Testis (tissue), 5 donors: ENCODE measurements at regions of chr14 and their contacts with region 1.

Region 1: GRCh38 chr14:73503648-73504047 is 12.9 kb downstream of the RIOX1 start:
- DNase-seq: no peak
- H3K4me3 ChIP-seq: no peak overlapping the region
- H3K27ac ChIP-seq: no peak overlapping the region
- H3K4me1 ChIP-seq: no peaks in the 10 kb centered on the region
- H3K27me3 ChIP-seq: no peaks in the 10 kb centered on the region
- CTCF ChIP-seq: no peak
- POLR2A ChIP-seq: no peak

Region 2: DNA sequence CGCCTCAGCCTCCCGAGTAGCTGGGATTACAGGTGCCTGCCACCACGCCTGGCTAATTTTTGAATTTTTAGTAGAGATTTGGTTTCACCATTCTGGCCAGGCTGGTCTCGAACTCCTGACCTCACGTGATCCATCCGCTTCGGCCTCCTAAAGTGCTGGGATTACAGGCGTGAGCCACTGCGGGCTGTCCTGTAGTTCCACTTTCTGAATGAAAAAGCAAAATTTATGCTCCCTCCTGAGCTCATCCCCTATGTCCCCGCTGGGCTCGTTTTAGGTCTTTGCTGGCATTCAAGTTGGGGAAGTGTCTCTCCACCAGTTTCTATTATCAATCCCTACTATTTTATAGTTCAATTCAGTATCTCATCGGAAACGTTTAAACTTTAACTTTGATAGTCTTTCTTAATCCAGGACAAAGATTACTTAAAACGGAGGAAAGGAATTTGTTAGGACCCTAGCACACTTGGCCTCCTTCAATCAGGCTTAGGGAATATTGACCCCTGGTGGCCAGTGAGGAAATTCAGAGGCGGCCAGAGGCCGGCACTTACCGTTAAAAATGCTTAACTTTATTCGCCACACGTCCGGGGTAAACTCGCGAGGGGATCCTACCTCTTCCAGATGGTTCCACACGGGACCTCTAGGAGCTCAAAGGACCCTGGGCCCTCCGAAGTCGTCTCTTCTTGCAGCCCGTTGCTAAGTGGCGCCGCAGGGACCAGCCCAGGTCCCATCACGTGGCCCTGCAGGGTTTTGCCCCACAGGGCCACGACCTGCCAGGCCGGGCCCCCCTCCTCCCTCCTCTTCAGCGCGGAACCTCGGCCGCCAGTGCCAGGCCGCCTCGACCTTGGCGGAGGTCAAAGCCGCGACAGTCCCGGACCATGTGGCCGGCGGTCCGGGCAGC is 129.7 kb after region 1 on chr14:
- intact Hi-C with region 1: loop called (anchors 5 kb)
- DNase-seq: peak; percentile 80
- H3K4me3 ChIP-seq: peak overlapping the region; percentile 60 to 62
- H3K27ac ChIP-seq: peak overlapping the region; percentile 81 to 86
- H3K4me1 ChIP-seq: peaks cover 24% of the 10 kb centered on the region
- H3K27me3 ChIP-seq: no peaks in the 10 kb centered on the region
- CTCF ChIP-seq: peak; percentile 82 to 94 (median 92)
- POLR2A ChIP-seq: no peak